ENCODE measurements at regions of chr11 and their contacts with region 1.

Region 1: GRCh38 chr11:64251016-64251752 is at the start of gene PLCB3:
- DNase-seq: no peak
- H3K27ac ChIP-seq: peak within 1 kb of the TSS; percentile 98
- CTCF ChIP-seq: peak; percentile 87

Region 2: GRCh38 chr11:64204464-64204989 is 46.7 kb before region 1 on chr11:
- CTCF ChIA-PET with region 1: interaction called, 12 read pairs
- POLR2A ChIA-PET with region 1: no interaction called
- DNase-seq: peak; percentile 89
- H3K27ac ChIP-seq: peak overlapping the region; percentile 60
- CTCF ChIP-seq: peak; percentile 84

Measured in RWPE1 (cell line).